ENCODE measurements at regions of chr2 and their contacts with region 1.

Region 1: DNA sequence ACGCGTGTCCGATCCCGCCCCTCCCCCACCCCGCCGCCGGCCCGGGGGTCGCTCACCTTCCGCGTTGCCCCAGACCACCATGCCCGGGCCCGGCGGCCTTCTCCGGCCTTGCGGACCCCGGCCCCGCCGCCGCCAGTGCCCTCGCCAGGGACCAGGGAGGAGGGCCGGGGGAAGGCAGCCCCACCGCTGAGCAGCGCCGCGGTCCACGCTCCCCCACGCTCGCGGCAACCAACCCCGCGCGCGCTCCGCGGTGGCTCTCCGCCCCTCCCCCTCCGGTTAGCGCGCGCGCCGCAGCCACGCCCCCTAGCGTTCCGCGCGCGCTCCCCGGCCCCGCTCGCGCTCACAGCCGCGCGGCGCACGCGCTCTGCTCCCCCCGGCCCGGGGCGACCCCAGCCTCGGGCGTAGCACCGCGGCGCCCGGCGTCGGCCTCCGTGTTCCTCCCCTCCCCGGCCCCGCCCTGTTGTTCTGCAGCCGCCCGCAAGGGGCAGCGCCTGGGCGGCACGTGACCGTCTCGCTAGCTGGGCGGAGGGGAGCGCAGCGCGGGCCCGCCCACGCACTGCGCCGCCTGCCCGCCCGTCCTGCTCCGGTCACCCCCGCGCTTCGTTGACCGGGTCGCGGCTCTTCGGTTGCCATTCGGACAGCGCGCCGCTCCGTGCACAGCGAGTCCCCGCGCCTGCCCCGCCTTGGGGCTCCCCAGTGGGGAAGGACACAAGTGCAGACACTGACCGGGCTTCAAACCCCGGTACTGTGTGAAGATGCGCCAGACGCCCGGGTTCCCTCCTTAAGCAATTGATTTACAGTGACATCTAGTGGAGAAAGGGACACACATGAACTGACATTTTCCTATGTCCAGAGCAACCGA is at the start of gene REV1:
- DNase-seq: peak; percentile 85 to 97 (median 94)
- ATAC-seq: peak; percentile 88
- H3K4me3 ChIP-seq: peak within 1 kb of the TSS; percentile 87 to 89
- H3K4me3 Mint-ChIP-seq: peak within 1 kb of the TSS; percentile 97
- H3K27ac ChIP-seq: peak within 1 kb of the TSS; percentile 76 to 86
- H3K27ac Mint-ChIP-seq: peak within 1 kb of the TSS; percentile 98
- H3K4me1 ChIP-seq: peaks cover 24% of the 10 kb centered on the region
- H3K4me1 Mint-ChIP-seq: peaks cover 43% of the 10 kb centered on the region
- H3K27me3 ChIP-seq: no peaks in the 10 kb centered on the region
- H3K27me3 Mint-ChIP-seq: no peaks in the 10 kb centered on the region
- CTCF ChIP-seq: peak; percentile 78
- total RNA-seq, gene REV1: 39.3 to 42.3 TPM

Region 2: GRCh38 chr2:98608116-98608999 is 881.6 kb before region 1 on chr2 and contains the starts of genes COA5 and UNC50:
- CTCF ChIA-PET with region 1: no interaction called
- POLR2A ChIA-PET with region 1: no interaction called
- intact Hi-C with region 1: loop called in 1 of 2 experiments (anchors 5 kb)
- DNase-seq: peak; percentile 84 to 95 (median 89)
- ATAC-seq: peak; percentile 81
- H3K4me3 ChIP-seq: peak within 1 kb of the TSS; percentile 84 to 94
- H3K4me3 Mint-ChIP-seq: peak within 1 kb of the TSS; percentile 89
- H3K27ac ChIP-seq: peak within 1 kb of the TSS; percentile 87 to 95
- H3K27ac Mint-ChIP-seq: peak within 1 kb of the TSS; percentile 95
- H3K4me1 ChIP-seq: peaks cover 48% of the 10 kb centered on the region
- H3K4me1 Mint-ChIP-seq: peaks cover 74% of the 10 kb centered on the region
- H3K27me3 ChIP-seq: no peaks in the 10 kb centered on the region
- H3K27me3 Mint-ChIP-seq: no peaks in the 10 kb centered on the region
- CTCF ChIP-seq: no peak
- total RNA-seq, gene COA5: 19.7 to 24.1 TPM
- total RNA-seq, gene UNC50: 12.5 to 14.4 TPM

Region 3: GRCh38 chr2:98683728-98684127 is 806.3 kb before region 1 on chr2:
- CTCF ChIA-PET with region 1: no interaction called
- POLR2A ChIA-PET with region 1: no interaction called
- intact Hi-C with region 1: no loop called
- DNase-seq: no peak
- ATAC-seq: no peak
- H3K4me3 ChIP-seq: no peak overlapping the region
- H3K4me3 Mint-ChIP-seq: no peak overlapping the region
- H3K27ac ChIP-seq: no peak overlapping the region
- H3K27ac Mint-ChIP-seq: peak overlapping the region; percentile 84
- H3K4me1 ChIP-seq: peaks cover 51% of the 10 kb centered on the region
- H3K4me1 Mint-ChIP-seq: peaks cover 81% of the 10 kb centered on the region
- H3K27me3 ChIP-seq: no peaks in the 10 kb centered on the region
- H3K27me3 Mint-ChIP-seq: no peaks in the 10 kb centered on the region
- CTCF ChIP-seq: no peak

Region 4: DNA sequence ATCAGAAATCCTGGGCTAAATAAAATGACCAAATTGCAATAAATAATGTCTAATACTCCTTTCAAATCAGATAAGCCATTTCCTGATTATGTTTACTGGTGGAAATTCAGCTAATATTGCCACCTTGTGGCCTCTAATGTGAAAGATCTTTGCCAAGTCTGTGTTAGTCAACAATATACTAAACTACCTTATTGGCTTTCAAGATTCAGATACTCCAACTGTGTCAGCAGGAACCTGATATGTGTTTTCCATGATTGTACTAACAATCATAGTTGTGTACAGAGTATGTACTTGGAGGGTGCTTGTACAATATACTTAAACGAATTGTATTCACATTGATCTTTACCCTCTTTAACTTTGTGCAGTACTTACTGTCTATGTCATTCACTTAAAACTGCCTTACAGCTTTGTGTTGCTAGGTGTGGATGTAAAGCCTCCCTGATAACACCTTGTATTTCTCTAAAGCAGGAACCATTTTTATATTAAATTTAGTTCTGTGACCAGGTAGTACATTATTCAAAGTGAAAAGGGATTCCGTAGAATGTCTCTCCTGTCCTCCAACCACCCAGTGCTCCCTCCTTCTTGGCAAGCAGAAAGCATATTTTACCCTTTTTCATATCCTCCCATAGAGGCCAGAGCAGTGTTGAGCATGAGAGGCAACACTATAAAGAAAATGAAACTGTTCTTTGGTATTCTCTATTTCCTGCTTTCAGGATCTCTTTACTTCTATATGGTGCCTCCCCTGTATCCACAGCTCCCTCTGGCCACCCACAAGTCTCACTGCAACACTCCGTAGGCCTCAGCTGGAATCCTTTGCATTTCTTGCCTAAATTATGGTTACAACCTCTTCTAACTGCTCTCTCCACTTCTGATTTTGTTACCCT is 423.7 kb before region 1 on chr2:
- CTCF ChIA-PET with region 1: no interaction called
- POLR2A ChIA-PET with region 1: no interaction called
- intact Hi-C with region 1: loop called in 1 of 2 experiments (anchors 5 kb)
- DNase-seq: peak in 3 of 9 experiments; percentile 29 to 75 (median 45)
- ATAC-seq: peak; percentile 93
- H3K4me3 ChIP-seq: no peak overlapping the region
- H3K4me3 Mint-ChIP-seq: no peak overlapping the region
- H3K27ac ChIP-seq: peak overlapping the region in 1 of 2 experiments; percentile 70
- H3K27ac Mint-ChIP-seq: no peak overlapping the region
- H3K4me1 ChIP-seq: peaks cover 13% of the 10 kb centered on the region
- H3K4me1 Mint-ChIP-seq: peaks cover 2% of the 10 kb centered on the region
- H3K27me3 ChIP-seq: no peaks in the 10 kb centered on the region
- H3K27me3 Mint-ChIP-seq: no peaks in the 10 kb centered on the region
- CTCF ChIP-seq: no peak

Region 5: GRCh38 chr2:99085421-99085820 is 404.6 kb before region 1 on chr2:
- CTCF ChIA-PET with region 1: no interaction called
- POLR2A ChIA-PET with region 1: no interaction called
- intact Hi-C with region 1: loop called in 1 of 2 experiments (anchors 1 kb)
- DNase-seq: peak in 5 of 9 experiments; percentile 2 to 37 (median 23)
- ATAC-seq: no peak
- H3K4me3 ChIP-seq: no peak overlapping the region
- H3K4me3 Mint-ChIP-seq: no peak overlapping the region
- H3K27ac ChIP-seq: no peak overlapping the region
- H3K27ac Mint-ChIP-seq: no peak overlapping the region
- H3K4me1 ChIP-seq: peaks cover 7% of the 10 kb centered on the region
- H3K4me1 Mint-ChIP-seq: peaks cover 8% of the 10 kb centered on the region
- H3K27me3 ChIP-seq: no peaks in the 10 kb centered on the region
- H3K27me3 Mint-ChIP-seq: peaks cover 3% of the 10 kb centered on the region
- CTCF ChIP-seq: peak; percentile 44

Region 6: GRCh38 chr2:99141110-99142108 is 348.6 kb before region 1 on chr2 and contains the start of gene C2orf15:
- CTCF ChIA-PET with region 1: no interaction called
- POLR2A ChIA-PET with region 1: interaction called, 3 read pairs
- intact Hi-C with region 1: loop called (anchors 1 kb)
- DNase-seq: peak; percentile 91 to 98 (median 97)
- ATAC-seq: peak; percentile 88
- H3K4me3 ChIP-seq: peak within 1 kb of the TSS; percentile 86 to 97
- H3K4me3 Mint-ChIP-seq: peak within 1 kb of the TSS; percentile 88
- H3K27ac ChIP-seq: peak within 1 kb of the TSS; percentile 90 to 91
- H3K27ac Mint-ChIP-seq: peak within 1 kb of the TSS; percentile 96
- H3K4me1 ChIP-seq: peaks cover 14% of the 10 kb centered on the region
- H3K4me1 Mint-ChIP-seq: peaks cover 25% of the 10 kb centered on the region
- H3K27me3 ChIP-seq: no peaks in the 10 kb centered on the region
- H3K27me3 Mint-ChIP-seq: no peaks in the 10 kb centered on the region
- CTCF ChIP-seq: no peak
- total RNA-seq, gene C2orf15: 1.3 to 1.8 TPM

Region 7: GRCh38 chr2:99311451-99311850 is 178.5 kb before region 1 on chr2:
- CTCF ChIA-PET with region 1: no interaction called
- POLR2A ChIA-PET with region 1: no interaction called
- intact Hi-C with region 1: no loop called
- DNase-seq: no peak
- ATAC-seq: no peak
- H3K4me3 ChIP-seq: no peak overlapping the region
- H3K4me3 Mint-ChIP-seq: no peak overlapping the region
- H3K27ac ChIP-seq: no peak overlapping the region
- H3K27ac Mint-ChIP-seq: no peak overlapping the region
- H3K4me1 ChIP-seq: no peaks in the 10 kb centered on the region
- H3K4me1 Mint-ChIP-seq: no peaks in the 10 kb centered on the region
- H3K27me3 ChIP-seq: no peaks in the 10 kb centered on the region
- H3K27me3 Mint-ChIP-seq: no peaks in the 10 kb centered on the region
- CTCF ChIP-seq: no peak

Region 8: DNA sequence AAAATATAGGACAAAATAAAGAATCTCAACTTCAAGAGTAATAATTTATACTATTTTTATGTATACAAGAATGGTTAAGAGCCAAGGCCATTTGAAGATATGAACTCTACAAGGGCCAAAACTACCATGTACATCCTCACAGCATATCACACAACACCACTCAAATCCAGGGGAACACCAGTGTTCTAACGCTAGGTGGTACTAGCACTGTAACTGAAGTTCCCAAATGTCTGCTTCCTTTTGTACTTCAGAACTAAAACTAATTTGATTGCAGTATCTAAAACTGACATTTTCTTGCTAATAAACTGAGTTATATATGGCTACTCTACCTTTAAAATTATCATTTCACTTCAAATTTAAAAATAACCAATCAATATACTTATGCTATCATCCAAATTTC is 47.2 kb before region 1 on chr2:
- CTCF ChIA-PET with region 1: no interaction called
- POLR2A ChIA-PET with region 1: no interaction called
- intact Hi-C with region 1: loop called (anchors 2 to 5 kb)
- DNase-seq: peak in 2 of 9 experiments; percentile 14 to 16
- ATAC-seq: no peak
- H3K4me3 ChIP-seq: no peak overlapping the region
- H3K4me3 Mint-ChIP-seq: no peak overlapping the region
- H3K27ac ChIP-seq: no peak overlapping the region
- H3K27ac Mint-ChIP-seq: peak overlapping the region; percentile 22
- H3K4me1 ChIP-seq: no peaks in the 10 kb centered on the region
- H3K4me1 Mint-ChIP-seq: peaks cover 9% of the 10 kb centered on the region
- H3K27me3 ChIP-seq: no peaks in the 10 kb centered on the region
- H3K27me3 Mint-ChIP-seq: no peaks in the 10 kb centered on the region
- CTCF ChIP-seq: no peak

Measured in CD8-positive, alpha-beta T cell (primary cell).